SK-N-SH (cell line): ENCODE measurements at regions of chr20 and their contacts with region 1.

Region 1: GRCh38 chr20:36919715-36920333 is 31.7 kb downstream of the SAMHD1 start:
- DNase-seq: peak; percentile 63
- H3K4me3 ChIP-seq: no peak overlapping the region
- H3K27ac ChIP-seq: no peak overlapping the region
- H3K4me1 ChIP-seq: no peaks in the 10 kb centered on the region
- H3K27me3 ChIP-seq: no peaks in the 10 kb centered on the region
- CTCF ChIP-seq: peak; percentile 83
- EP300 ChIP-seq: no peak
- RAD21 ChIP-seq: peak; percentile 87

Region 2: GRCh38 chr20:36847009-36847709 is 72.7 kb before region 1 on chr20:
- CTCF ChIA-PET with region 1: no interaction called
- POLR2A ChIA-PET with region 1: no interaction called
- DNase-seq: no peak
- H3K4me3 ChIP-seq: no peak overlapping the region
- H3K27ac ChIP-seq: peak overlapping the region in 1 of 2 experiments; percentile 91; a peak in 2 of 4 replicates
- H3K4me1 ChIP-seq: peaks cover 6 to 21% of the 10 kb centered on the region in 2 experiments; a peak in 2 of 4 replicates
- H3K27me3 ChIP-seq: no peaks in the 10 kb centered on the region
- CTCF ChIP-seq: no peak
- EP300 ChIP-seq: no peak
- RAD21 ChIP-seq: no peak

Region 3: DNA sequence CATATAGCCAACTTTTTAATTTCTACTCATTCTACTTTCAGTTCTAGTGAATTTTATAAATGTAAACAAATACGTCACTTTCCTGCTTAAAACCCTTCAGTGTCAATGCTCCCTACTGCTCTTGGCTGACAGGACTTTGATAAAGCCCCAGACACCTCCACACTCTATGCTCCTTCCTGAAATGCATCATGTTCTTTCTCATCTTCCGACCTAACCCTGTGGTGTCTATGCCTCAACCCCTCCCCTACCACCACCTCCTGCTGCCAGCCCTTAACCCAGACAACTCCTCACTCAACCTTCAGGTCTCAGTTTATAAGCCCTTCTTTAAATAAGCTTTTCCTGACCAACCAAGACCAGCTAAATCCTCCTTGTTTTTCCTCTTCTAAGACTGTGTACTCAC is 24.8 kb before region 1 on chr20:
- CTCF ChIA-PET with region 1: interaction called, 13 read pairs
- POLR2A ChIA-PET with region 1: no interaction called
- DNase-seq: no peak
- H3K4me3 ChIP-seq: no peak overlapping the region
- H3K27ac ChIP-seq: no peak overlapping the region
- H3K4me1 ChIP-seq: no peaks in the 10 kb centered on the region
- H3K27me3 ChIP-seq: no peaks in the 10 kb centered on the region
- CTCF ChIP-seq: no peak
- EP300 ChIP-seq: no peak
- RAD21 ChIP-seq: no peak

Region 4: GRCh38 chr20:36908603-36909002 is 11.2 kb before region 1 on chr20:
- CTCF ChIA-PET with region 1: interaction called, 11 read pairs
- POLR2A ChIA-PET with region 1: interaction called, 3 read pairs
- DNase-seq: peak; percentile 47
- H3K4me3 ChIP-seq: no peak overlapping the region
- H3K27ac ChIP-seq: no peak overlapping the region
- H3K4me1 ChIP-seq: peaks cover 0 to 2% of the 10 kb centered on the region in 2 experiments; a peak in 1 of 4 replicates
- H3K27me3 ChIP-seq: no peaks in the 10 kb centered on the region
- CTCF ChIP-seq: no peak
- EP300 ChIP-seq: no peak
- RAD21 ChIP-seq: no peak

Region 5: DNA sequence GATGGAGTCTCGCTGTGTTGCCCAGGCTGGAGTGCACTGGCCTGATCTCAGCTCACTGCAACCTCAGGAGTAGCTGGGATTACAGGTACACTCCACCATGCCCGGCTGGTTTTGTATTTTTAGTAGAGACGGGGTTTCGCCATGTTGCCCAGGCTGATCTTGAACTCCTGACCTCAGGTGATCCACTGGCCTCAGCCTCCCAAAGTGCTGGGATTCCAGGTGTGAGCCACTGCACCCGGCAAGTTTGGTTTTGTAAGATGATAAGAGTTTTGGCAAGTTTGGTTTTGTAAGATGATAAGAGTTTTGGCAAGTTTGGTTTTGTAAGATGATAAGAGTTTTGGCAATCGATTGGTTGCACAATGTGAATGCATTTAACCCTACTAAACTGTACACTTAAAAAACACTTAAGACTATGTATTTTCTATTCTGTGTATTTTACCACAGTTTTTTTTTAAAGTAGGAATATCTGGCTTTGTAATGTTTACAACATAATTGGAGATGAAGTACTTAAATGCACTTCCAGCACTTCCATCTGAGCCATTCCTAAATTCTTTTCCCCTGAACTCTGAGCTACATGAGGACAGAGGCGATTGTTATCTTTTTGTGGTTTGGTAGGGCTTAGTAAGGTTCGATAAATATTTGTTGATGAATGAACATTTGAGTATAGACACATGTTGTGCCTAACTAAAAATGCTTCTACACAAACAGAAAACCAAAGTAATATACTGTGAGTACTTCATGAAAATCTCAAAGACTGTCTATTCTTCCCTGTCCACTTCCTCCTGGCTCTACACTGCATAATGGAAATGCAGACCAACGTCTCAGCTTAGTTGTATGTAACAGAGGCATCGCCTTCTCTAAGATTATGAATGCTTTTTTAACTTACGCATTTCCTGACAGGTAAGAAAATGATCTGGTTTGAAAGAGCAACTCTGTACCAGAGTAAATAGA is 12.9 kb after region 1 on chr20:
- CTCF ChIA-PET with region 1: interaction called, 13 read pairs
- POLR2A ChIA-PET with region 1: no interaction called
- DNase-seq: no peak
- H3K4me3 ChIP-seq: no peak overlapping the region
- H3K27ac ChIP-seq: no peak overlapping the region
- H3K4me1 ChIP-seq: no peaks in the 10 kb centered on the region
- H3K27me3 ChIP-seq: no peaks in the 10 kb centered on the region
- CTCF ChIP-seq: no peak
- EP300 ChIP-seq: no peak
- RAD21 ChIP-seq: no peak

Region 6: GRCh38 chr20:36992802-36993334 is 73.0 kb after region 1 on chr20:
- CTCF ChIA-PET with region 1: no interaction called
- POLR2A ChIA-PET with region 1: no interaction called
- DNase-seq: no peak
- H3K4me3 ChIP-seq: no peak overlapping the region
- H3K27ac ChIP-seq: no peak overlapping the region
- H3K4me1 ChIP-seq: no peaks in the 10 kb centered on the region
- H3K27me3 ChIP-seq: no peaks in the 10 kb centered on the region
- CTCF ChIP-seq: no peak
- EP300 ChIP-seq: no peak
- RAD21 ChIP-seq: no peak